ENCODE measurements at regions of chr11 and their contacts with region 1.

Region 1: GRCh38 chr11:122853971-122854446 is 15.7 kb downstream of the CRTAM start:
- DNase-seq: peak; percentile 50 to 61 (median 55)
- H3K4me3 ChIP-seq: no peak overlapping the region
- H3K4me3 Mint-ChIP-seq: no peak overlapping the region
- H3K27ac ChIP-seq: no peak overlapping the region
- H3K27ac Mint-ChIP-seq: no peak overlapping the region
- H3K4me1 ChIP-seq: peaks cover 25% of the 10 kb centered on the region
- H3K4me1 Mint-ChIP-seq: peaks cover 16 to 28% (median 22%) of the 10 kb centered on the region in 4 donors
- H3K27me3 ChIP-seq: no peaks in the 10 kb centered on the region
- H3K27me3 Mint-ChIP-seq: peaks cover 0 to 2% of the 10 kb centered on the region in 2 donors

Region 2: DNA sequence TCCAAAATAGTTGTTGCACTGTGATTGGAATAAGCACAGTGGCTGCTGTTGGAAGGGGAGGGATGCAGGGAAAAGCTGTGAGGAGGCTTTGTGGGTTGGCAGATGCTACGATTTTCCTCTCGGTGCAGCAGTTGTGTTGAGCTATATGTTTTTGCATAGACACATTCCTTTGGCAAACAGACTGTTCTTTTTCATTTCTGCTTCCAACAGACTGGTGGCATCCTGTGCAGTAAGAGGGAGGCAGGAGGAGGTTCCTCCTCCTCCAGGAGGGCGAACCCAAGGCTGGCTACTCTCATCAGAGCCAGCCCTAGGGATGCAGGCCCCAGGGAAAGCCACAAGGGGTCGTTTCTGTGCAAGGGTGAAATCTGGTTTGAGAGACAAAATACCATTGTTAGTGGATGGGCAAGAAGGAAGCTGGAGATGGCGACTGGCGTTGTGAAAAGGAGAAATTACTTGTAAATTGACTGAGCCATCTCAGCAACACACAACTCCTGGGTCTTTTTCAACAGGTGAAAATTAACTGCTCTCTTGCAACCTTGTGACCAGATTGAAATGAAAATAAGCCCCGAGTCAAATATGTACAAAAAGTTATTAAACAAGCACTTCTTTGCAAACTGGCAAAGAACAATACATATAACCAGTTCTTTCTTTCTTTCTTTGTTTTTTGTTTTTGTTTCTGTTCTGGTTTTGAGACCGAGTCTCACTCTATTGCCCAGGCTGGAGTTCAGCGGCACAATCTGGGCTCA is 225.0 kb before region 1 on chr11:
- CTCF ChIA-PET with region 1: interaction called, 71 read pairs
- POLR2A ChIA-PET with region 1: no interaction called
- intact Hi-C with region 1: loop called (anchors 1 kb)
- DNase-seq: peak; percentile 60 to 64 (median 62)
- H3K4me3 ChIP-seq: no peak overlapping the region
- H3K4me3 Mint-ChIP-seq: no peak overlapping the region
- H3K27ac ChIP-seq: no peak overlapping the region
- H3K27ac Mint-ChIP-seq: no peak overlapping the region
- H3K4me1 ChIP-seq: peaks cover 8% of the 10 kb centered on the region
- H3K4me1 Mint-ChIP-seq: peaks cover 0 to 10% (median 6%) of the 10 kb centered on the region in 4 donors
- H3K27me3 ChIP-seq: no peaks in the 10 kb centered on the region
- H3K27me3 Mint-ChIP-seq: peaks cover 0 to 1% of the 10 kb centered on the region in 2 donors

Region 3: GRCh38 chr11:122796128-122796717 is 57.8 kb before region 1 on chr11:
- CTCF ChIA-PET with region 1: interaction called, 175 read pairs
- POLR2A ChIA-PET with region 1: interaction called, 4 read pairs
- intact Hi-C with region 1: loop called (anchors 1 kb)
- DNase-seq: peak; percentile 33 to 59 (median 44)
- H3K4me3 ChIP-seq: no peak overlapping the region
- H3K4me3 Mint-ChIP-seq: no peak overlapping the region
- H3K27ac ChIP-seq: no peak overlapping the region
- H3K27ac Mint-ChIP-seq: peak overlapping the region in 2 of 7 donors; percentile 47 to 76
- H3K4me1 ChIP-seq: no peaks in the 10 kb centered on the region
- H3K4me1 Mint-ChIP-seq: peaks cover 0 to 2% (median 0%) of the 10 kb centered on the region in 4 donors
- H3K27me3 ChIP-seq: no peaks in the 10 kb centered on the region
- H3K27me3 Mint-ChIP-seq: no peaks in the 10 kb centered on the region

Region 4: GRCh38 chr11:122814401-122814800 is 39.6 kb before region 1 on chr11:
- CTCF ChIA-PET with region 1: interaction called, 52 read pairs
- POLR2A ChIA-PET with region 1: interaction called, 3 read pairs
- intact Hi-C with region 1: loop called (anchors 5 kb)
- DNase-seq: no peak
- H3K4me3 ChIP-seq: no peak overlapping the region
- H3K4me3 Mint-ChIP-seq: no peak overlapping the region
- H3K27ac ChIP-seq: no peak overlapping the region
- H3K27ac Mint-ChIP-seq: no peak overlapping the region
- H3K4me1 ChIP-seq: peaks cover 3% of the 10 kb centered on the region
- H3K4me1 Mint-ChIP-seq: peaks cover 7 to 12% (median 9%) of the 10 kb centered on the region in 4 donors
- H3K27me3 ChIP-seq: no peaks in the 10 kb centered on the region
- H3K27me3 Mint-ChIP-seq: no peaks in the 10 kb centered on the region

Region 5: DNA sequence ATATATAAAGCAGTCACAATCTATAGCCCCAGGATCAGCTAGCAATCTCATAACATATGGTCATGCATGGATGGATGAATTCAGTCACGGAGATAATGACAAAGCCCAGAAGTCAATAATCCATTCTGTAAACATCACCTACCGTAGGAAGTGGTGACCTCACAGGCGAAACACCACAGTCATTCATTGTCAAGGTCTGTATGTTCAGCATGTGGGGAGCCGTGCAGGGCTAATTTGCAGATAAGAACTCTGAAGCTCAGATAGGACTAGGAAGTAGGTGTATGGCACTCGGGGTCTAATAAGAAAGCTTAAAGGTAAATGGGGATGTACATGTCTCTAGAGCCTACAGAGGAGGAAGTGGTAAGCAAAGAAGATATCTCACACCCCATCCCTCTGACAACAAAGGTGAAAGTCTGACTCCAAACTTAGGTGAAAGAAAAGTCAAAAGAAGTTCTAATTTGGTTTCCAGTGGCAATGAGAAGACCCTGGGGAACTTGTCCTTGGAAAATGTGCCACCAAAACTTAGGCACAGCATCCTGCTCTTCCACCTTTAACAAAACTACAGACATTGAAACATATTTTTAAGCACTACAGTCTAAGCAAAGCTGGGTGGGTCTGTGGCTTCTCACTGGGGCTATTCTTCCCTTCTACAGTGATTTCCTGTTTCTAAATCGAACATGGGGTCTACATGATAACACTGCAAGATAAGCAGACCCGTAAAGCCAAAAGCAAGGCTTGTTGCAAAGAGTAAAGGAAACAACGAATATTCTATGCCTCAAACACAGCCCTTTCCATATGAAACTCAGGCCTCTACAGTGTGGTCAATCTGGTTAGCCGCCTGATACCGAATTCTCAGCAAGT is 10.5 kb before region 1 on chr11:
- CTCF ChIA-PET with region 1: interaction called, 67 read pairs
- POLR2A ChIA-PET with region 1: interaction called, 23 read pairs
- intact Hi-C with region 1: no loop called
- DNase-seq: peak; percentile 37 to 75 (median 53)
- H3K4me3 ChIP-seq: no peak overlapping the region
- H3K4me3 Mint-ChIP-seq: peak overlapping the region in 7 of 8 donors; percentile 27 to 75 (median 65)
- H3K27ac ChIP-seq: peak overlapping the region; percentile 23
- H3K27ac Mint-ChIP-seq: peak overlapping the region; percentile 59 to 89 (median 76)
- H3K4me1 ChIP-seq: peaks cover 25% of the 10 kb centered on the region
- H3K4me1 Mint-ChIP-seq: peaks cover 18 to 33% (median 23%) of the 10 kb centered on the region in 4 donors
- H3K27me3 ChIP-seq: no peaks in the 10 kb centered on the region
- H3K27me3 Mint-ChIP-seq: peaks cover 1 to 2% of the 10 kb centered on the region in 2 donors

Region 6: DNA sequence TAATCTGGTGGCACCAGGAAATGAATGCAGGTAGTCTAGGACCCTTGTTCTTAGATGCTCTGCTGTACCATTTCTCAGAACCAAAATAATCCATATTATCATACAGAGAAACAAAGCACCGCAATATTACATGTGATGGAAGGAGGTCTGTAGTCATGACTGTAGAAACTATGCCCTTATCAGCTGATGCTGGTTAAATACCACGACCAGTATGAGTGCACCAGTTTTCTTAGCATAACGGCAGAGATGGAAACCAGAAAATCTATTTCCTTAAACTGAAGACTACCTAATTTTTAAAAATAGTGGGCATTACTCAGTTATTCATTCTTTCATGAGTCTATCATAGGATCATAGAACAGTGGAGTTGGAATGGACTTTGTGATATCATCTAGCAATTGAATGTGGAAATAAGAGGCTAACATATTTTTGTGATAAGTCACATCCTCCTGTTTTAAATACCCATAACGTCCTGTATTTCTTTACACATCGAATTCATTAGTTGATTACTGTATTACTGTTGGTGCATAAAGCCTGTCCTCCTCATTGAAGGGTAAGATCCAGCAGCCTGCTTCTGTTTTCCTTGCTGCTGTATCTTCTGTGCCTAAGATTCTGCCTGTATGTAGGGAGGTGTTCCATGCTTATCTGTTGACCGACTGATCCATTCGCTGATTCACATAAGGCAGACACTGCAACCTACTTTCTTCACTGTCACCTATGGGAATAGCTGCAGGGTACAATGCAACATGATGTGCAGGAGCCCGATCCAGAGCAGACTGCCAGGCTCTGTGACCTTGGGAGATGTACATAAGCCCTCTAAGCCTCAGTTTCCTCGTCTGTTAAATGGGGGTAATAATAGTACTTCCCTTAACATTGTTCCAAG is 43.8 kb after region 1 on chr11:
- CTCF ChIA-PET with region 1: no interaction called
- POLR2A ChIA-PET with region 1: no interaction called
- intact Hi-C with region 1: no loop called
- DNase-seq: no peak
- H3K4me3 ChIP-seq: no peak overlapping the region
- H3K4me3 Mint-ChIP-seq: no peak overlapping the region
- H3K27ac ChIP-seq: no peak overlapping the region
- H3K27ac Mint-ChIP-seq: no peak overlapping the region
- H3K4me1 ChIP-seq: no peaks in the 10 kb centered on the region
- H3K4me1 Mint-ChIP-seq: peaks cover 0 to 3% (median 0%) of the 10 kb centered on the region in 4 donors
- H3K27me3 ChIP-seq: no peaks in the 10 kb centered on the region
- H3K27me3 Mint-ChIP-seq: no peaks in the 10 kb centered on the region

Region 7: GRCh38 chr11:123020968-123021367 is 167.0 kb after region 1 on chr11:
- CTCF ChIA-PET with region 1: interaction called, 26 read pairs
- POLR2A ChIA-PET with region 1: no interaction called
- intact Hi-C with region 1: no loop called
- DNase-seq: peak in 4 of 5 donors; percentile 21 to 34 (median 26)
- H3K4me3 ChIP-seq: no peak overlapping the region
- H3K4me3 Mint-ChIP-seq: no peak overlapping the region
- H3K27ac ChIP-seq: no peak overlapping the region
- H3K27ac Mint-ChIP-seq: no peak overlapping the region
- H3K4me1 ChIP-seq: peaks cover 8% of the 10 kb centered on the region
- H3K4me1 Mint-ChIP-seq: peaks cover 5 to 8% (median 8%) of the 10 kb centered on the region in 4 donors
- H3K27me3 ChIP-seq: no peaks in the 10 kb centered on the region
- H3K27me3 Mint-ChIP-seq: peaks cover 3 to 4% of the 10 kb centered on the region in 2 donors

Measured in CD4-positive, alpha-beta memory T cell (primary cell).